ENCODE measurements at regions of chr21 and their contacts with region 1.

Region 1: DNA sequence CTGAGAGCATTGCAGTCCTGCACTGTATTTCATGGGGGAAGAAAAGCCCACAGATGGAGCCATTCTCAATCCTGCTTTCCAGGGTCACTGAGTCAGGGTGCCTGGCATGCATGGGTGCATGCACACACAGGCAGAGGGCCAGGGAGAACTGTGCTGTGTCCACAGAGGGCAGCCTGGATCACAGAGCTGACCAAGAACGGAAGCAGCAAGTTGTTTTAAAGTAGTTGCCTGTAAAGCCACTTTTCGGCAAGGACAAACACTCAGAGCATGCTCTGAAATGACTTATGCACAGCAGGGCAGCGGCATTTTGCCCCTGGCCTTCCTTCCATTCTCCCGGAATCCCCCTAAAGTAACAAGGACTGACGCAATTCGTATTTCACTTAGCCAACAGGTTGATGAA is 3.6 kb downstream of the ERG start:
- DNase-seq: no peak

Region 2: GRCh38 chr21:38377165-38378088 is 117.3 kb before region 1 on chr21:
- intact Hi-C with region 1: loop called (anchors 5 kb)
- DNase-seq: no peak